Activated CD4-positive, alpha-beta T cell treated with anti-CD3 and anti-CD28 coated beads, Interleukin-2, amount 10 ng/mL, durations not matched to agents 24 days and 14 days (primary cell): ENCODE measurements at regions of chr7 and their contacts with region 1.

Region 1: GRCh38 chr7:7640221-7641128 is at the start of gene UMAD1:
- DNase-seq: peak; percentile 99
- H3K4me3 Mint-ChIP-seq: peak within 1 kb of the TSS; percentile 97
- H3K27ac Mint-ChIP-seq: peak within 1 kb of the TSS; percentile 97
- H3K4me1 Mint-ChIP-seq: peaks cover 31% of the 10 kb centered on the region
- H3K27me3 Mint-ChIP-seq: no peaks in the 10 kb centered on the region
- total RNA-seq, gene UMAD1: 11.8 and 12.4 TPM in 2 replicates

Region 2: DNA sequence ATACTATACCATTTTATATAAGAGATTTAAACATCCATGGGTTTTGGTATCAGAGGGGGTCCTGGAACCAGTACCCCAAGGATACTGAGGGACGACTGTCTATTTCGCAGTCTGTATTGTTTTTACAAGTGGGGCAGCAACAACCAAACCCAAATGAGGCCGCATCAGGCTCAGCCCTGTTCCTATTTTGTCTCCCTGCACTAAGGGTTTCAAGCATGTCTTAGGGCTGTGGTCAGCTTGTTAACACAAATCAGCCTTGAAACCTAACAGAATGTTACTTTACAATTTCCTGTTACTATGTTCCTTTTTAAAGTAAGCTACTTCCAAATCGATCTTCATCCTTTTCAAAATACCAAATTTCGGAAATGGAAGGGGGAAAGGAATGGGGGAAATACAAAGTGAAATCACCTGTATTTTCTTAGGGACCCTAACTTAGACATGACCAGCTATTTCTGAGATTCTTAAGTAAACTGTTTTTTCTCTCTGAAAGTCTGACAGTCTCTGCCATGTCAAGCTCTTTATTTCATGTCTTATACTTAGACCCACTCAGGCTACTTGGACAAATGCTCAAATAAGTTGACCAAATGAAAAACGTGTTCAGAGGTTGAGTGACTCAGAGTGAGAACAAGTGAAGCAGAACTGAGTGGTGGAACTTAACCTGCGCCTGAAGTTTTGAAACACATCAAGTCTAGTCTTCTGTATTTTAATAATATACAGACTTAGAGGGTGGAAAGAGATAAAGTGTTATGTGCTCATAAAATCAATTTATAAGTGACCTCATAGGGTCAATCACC is 382.4 kb before region 1 on chr7:
- intact Hi-C with region 1: loop called (anchors 2 kb)
- DNase-seq: peak; percentile 67
- H3K4me3 Mint-ChIP-seq: peak overlapping the region; percentile 72
- H3K27ac Mint-ChIP-seq: peak overlapping the region; percentile 83
- H3K4me1 Mint-ChIP-seq: peaks cover 31% of the 10 kb centered on the region
- H3K27me3 Mint-ChIP-seq: no peaks in the 10 kb centered on the region

Region 3: DNA sequence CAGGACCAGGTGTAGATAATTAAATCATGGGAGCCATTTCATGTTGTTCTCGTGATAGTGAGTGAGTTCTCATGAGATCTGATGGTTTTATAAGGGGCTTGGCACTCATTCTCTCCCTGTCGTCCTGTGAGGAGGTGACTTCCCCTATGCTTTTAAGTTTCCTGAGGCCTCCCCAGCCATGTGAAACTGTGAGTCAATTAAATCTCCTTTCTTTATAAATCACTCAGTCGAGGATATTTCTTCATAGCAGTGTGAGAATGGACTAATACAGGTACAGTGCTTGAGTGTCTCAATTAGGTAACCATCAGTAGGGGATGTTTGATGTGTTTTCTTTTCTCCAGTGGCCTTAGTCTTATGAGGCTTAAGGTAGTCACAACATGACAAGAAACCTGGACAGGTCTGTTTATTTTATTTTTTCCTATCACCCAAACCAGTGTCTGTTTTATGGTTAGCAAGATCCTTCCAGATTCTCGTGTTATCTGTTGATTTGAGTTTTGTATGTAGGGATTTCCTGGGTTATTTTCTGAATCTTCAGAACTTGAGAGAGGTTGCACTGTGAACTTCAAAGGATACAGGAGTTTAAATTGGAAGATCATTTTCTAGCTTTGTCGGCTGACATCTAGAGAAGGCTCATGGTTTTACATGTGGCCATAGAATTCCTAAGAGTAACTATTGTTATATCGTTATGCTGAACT is 32.2 kb after region 1 on chr7:
- intact Hi-C with region 1: loop called (anchors 1 kb)
- DNase-seq: peak; percentile 50
- H3K4me3 Mint-ChIP-seq: peak overlapping the region; percentile 55
- H3K27ac Mint-ChIP-seq: peak overlapping the region; percentile 72
- H3K4me1 Mint-ChIP-seq: peaks cover 29% of the 10 kb centered on the region
- H3K27me3 Mint-ChIP-seq: no peaks in the 10 kb centered on the region

Region 4: GRCh38 chr7:7719236-7719635 is 78.8 kb after region 1 on chr7:
- intact Hi-C with region 1: loop called (anchors 1 kb)
- DNase-seq: peak; percentile 84
- H3K4me3 Mint-ChIP-seq: peak overlapping the region; percentile 47
- H3K27ac Mint-ChIP-seq: peak overlapping the region; percentile 73
- H3K4me1 Mint-ChIP-seq: peaks cover 17% of the 10 kb centered on the region
- H3K27me3 Mint-ChIP-seq: no peaks in the 10 kb centered on the region

Region 5: DNA sequence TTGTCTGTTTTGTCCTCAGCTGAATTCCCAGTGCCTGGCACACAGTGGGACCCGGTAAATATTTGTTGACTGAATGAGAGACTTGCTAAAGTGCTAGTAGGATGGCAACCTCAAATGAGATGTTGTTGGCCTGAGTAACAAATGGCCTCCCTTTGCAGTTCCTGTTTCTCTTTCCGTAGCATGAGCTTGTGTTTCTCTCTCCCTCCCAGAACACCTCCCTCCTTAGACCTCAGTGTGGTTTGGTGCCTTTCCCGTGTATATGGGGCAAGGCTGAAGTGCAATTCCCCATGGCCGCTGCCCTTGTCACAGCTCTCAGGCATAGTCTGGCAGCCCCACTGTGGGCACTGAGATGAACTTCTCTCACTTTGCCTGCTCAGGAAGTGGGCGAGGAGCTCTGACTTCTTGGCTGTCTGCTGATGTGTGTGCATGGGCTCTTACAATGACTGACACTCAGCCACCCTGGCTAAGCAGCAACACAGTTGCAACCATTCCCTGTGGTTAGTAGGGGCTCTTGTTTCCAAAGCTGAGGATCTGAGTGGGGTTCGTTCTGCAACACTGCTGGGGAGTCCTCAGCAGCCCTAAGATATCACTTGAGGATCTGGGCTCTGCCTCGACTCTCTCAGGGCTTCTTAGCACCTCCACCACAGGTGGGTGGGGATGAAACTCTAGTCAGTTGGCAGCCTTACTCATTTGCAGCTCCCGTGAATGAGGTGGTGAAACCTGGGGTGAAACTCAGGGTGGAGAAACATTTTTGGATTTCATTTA is 485.4 kb after region 1 on chr7:
- intact Hi-C with region 1: loop called (anchors 2 kb)
- DNase-seq: peak; percentile 91
- H3K4me3 Mint-ChIP-seq: peak overlapping the region; percentile 76
- H3K27ac Mint-ChIP-seq: peak overlapping the region; percentile 98
- H3K4me1 Mint-ChIP-seq: peaks cover 67% of the 10 kb centered on the region
- H3K27me3 Mint-ChIP-seq: no peaks in the 10 kb centered on the region

Region 6: DNA sequence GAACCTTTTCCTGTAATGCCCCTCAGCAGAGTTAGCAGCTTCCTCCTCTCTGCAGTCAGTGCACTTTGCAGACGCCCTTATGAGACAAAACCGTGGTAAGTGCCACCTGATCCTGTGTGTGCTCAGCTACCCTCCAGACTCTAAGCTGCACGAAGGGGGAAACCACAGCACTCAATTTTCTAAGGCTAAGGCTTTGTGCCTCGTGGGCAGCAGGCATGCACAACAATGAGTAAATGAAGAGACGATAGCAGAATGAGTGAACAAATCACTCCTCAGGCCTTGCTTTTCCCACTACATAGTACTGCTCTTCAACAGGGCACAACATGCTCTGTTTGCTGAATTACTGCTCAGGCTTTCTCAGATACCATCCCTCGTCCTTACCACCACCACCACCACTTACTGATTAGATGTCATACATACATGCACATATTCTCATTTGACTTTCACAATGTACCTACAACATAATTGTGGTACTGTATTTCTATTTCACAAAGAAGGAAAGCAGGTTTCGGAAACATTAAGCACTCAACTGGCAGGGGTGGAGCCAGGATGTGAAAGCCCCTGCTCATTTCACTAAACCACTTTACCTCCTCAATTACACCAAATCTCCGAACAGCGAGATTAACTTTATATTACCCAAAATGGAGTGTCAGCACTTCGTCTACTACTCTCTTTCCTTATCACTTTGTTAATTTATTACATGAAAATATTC is 536.1 kb after region 1 on chr7:
- intact Hi-C with region 1: loop called (anchors 2 kb)
- DNase-seq: peak; percentile 89
- H3K4me3 Mint-ChIP-seq: peak overlapping the region; percentile 78
- H3K27ac Mint-ChIP-seq: peak overlapping the region; percentile 93
- H3K4me1 Mint-ChIP-seq: peaks cover 40% of the 10 kb centered on the region
- H3K27me3 Mint-ChIP-seq: no peaks in the 10 kb centered on the region